K562 (cell line): ENCODE measurements at regions of chr1 and their contacts with region 1.

Region 1: DNA sequence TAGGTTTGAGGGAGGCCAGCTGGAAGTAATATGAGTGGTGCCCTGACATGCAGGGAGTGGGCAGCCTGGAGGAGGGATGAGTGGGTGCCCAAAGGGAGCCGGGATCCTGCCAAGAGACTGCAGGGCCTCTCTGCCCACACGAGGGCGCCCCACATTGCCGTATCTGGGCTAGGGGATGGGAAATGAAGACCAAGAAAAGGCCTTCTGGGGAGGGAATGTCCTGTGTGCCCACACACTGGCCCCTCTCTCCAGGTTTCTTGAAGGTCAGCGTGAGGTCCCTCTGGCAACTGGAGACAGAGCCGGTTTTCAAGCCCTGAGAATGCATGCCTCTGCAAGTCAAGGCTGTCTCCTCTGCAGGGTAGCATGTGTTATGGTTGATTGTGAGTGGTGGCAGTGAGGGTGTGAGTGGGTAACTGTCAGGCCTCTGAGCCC is 94.1 kb upstream of the PPM1J start:
- DNase-seq: peak; percentile 78 to 88 (median 82)
- ATAC-seq: peak; percentile 97
- H3K4me3 ChIP-seq: no peak overlapping the region
- H3K27ac ChIP-seq: no peak overlapping the region
- H3K4me1 ChIP-seq: peaks cover 2 to 6% of the 10 kb centered on the region in 2 experiments; a peak in 3 of 5 replicates
- H3K27me3 ChIP-seq: peaks cover 19 to 20% of the 10 kb centered on the region in 2 experiments; a peak in 4 of 5 replicates
- CTCF ChIP-seq: peak; percentile 89 to 98 (median 95)
- EP300 ChIP-seq: no peak
- POLR2A ChIP-seq: no peak
- RAD21 ChIP-seq: peak; percentile 94 to 98

Region 2: DNA sequence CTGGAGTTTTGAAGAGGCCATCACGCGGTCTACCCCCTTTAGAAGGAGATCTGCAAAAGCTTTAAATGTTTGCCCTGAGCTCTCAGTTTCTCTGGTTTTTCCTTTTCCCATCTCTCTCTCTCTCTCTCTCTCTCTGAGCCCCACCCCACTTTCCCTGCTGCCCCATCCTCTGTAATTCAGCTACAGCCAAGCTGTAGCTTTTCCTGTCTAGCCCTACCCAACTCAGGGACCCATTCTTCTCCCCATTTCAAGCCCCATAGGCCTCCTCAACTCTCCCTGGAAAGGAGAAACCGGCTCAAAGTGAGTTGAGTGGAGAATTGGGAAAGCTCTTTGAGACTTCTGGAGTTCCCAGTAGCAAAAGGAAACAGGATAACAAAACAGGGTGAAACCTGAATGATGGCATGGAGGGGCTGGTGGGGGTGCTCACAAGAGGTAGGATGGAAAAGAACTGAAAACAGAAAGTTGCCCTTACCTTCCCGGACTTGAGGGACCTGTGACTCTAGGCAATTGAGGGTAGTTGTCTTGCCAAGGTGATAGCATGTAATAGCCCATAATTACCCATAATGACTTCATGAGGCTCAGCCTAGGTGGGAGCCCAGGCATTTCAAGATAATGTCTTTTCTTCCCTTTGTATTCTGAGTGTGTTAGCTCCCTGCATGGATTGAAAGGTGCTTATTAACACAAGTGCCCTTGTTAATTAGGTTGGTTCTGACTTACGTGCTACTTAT is 61.8 kb after region 1 on chr1:
- CTCF ChIA-PET with region 1: interaction called, 3 read pairs
- POLR2A ChIA-PET with region 1: no interaction called
- in situ Hi-C with region 1: no loop called
- intact Hi-C with region 1: loop called (anchors 2 kb)
- DNase-seq: no peak
- ATAC-seq: no peak
- H3K4me3 ChIP-seq: no peak overlapping the region
- H3K27ac ChIP-seq: no peak overlapping the region
- H3K4me1 ChIP-seq: peaks cover 0 to 24% of the 10 kb centered on the region in 2 experiments; a peak in 3 of 5 replicates
- H3K27me3 ChIP-seq: no peaks in the 10 kb centered on the region
- CTCF ChIP-seq: no peak
- EP300 ChIP-seq: no peak
- POLR2A ChIP-seq: no peak
- RAD21 ChIP-seq: no peak

Region 3: GRCh38 chr1:112882271-112882744 is 73.0 kb after region 1 on chr1:
- CTCF ChIA-PET with region 1: interaction called, 3 read pairs
- POLR2A ChIA-PET with region 1: no interaction called
- in situ Hi-C with region 1: no loop called
- intact Hi-C with region 1: loop called (anchors 2 kb)
- DNase-seq: no peak
- ATAC-seq: peak; percentile 13
- H3K4me3 ChIP-seq: no peak overlapping the region
- H3K27ac ChIP-seq: peak overlapping the region; percentile 34; the same call in 2 of the 3 replicates
- H3K4me1 ChIP-seq: peaks cover 28 to 31% of the 10 kb centered on the region in 2 experiments
- H3K27me3 ChIP-seq: peaks cover 0 to 4% of the 10 kb centered on the region in 2 experiments; a peak in 1 of 5 replicates
- CTCF ChIP-seq: no peak
- EP300 ChIP-seq: no peak
- POLR2A ChIP-seq: no peak
- RAD21 ChIP-seq: no peak

Region 4: GRCh38 chr1:113042285-113043143 is 233.2 kb after region 1 on chr1:
- CTCF ChIA-PET with region 1: no interaction called
- POLR2A ChIA-PET with region 1: no interaction called
- in situ Hi-C with region 1: loop called (anchors 5 kb)
- intact Hi-C with region 1: loop called (anchors 1 kb)
- DNase-seq: peak; percentile 85 to 96 (median 90)
- ATAC-seq: peak; percentile 97
- H3K4me3 ChIP-seq: no peak overlapping the region
- H3K27ac ChIP-seq: peak overlapping the region; percentile 72
- H3K4me1 ChIP-seq: peaks cover 18 to 49% of the 10 kb centered on the region in 2 experiments
- H3K27me3 ChIP-seq: no peaks in the 10 kb centered on the region
- CTCF ChIP-seq: peak; percentile 90 to 98 (median 93)
- EP300 ChIP-seq: peak; percentile 73
- POLR2A ChIP-seq: no peak
- RAD21 ChIP-seq: peak; percentile 98

Region 5: GRCh38 chr1:113684153-113684541 is 874.9 kb after region 1 on chr1:
- CTCF ChIA-PET with region 1: no interaction called
- POLR2A ChIA-PET with region 1: no interaction called
- in situ Hi-C with region 1: loop called (anchors 5 kb)
- intact Hi-C with region 1: loop called (anchors 5 kb)
- DNase-seq: peak in 2 of 4 experiments; percentile 34 to 53
- ATAC-seq: peak; percentile 88
- H3K4me3 ChIP-seq: no peak overlapping the region
- H3K27ac ChIP-seq: no peak overlapping the region
- H3K4me1 ChIP-seq: peaks cover 0 to 4% of the 10 kb centered on the region in 2 experiments; a peak in 2 of 5 replicates
- H3K27me3 ChIP-seq: no peaks in the 10 kb centered on the region
- CTCF ChIP-seq: no peak
- EP300 ChIP-seq: no peak
- POLR2A ChIP-seq: no peak
- RAD21 ChIP-seq: no peak